Right cardiac atrium (tissue), 5 donors: ENCODE measurements at regions of chr3 and their contacts with region 1.

Region 1: DNA sequence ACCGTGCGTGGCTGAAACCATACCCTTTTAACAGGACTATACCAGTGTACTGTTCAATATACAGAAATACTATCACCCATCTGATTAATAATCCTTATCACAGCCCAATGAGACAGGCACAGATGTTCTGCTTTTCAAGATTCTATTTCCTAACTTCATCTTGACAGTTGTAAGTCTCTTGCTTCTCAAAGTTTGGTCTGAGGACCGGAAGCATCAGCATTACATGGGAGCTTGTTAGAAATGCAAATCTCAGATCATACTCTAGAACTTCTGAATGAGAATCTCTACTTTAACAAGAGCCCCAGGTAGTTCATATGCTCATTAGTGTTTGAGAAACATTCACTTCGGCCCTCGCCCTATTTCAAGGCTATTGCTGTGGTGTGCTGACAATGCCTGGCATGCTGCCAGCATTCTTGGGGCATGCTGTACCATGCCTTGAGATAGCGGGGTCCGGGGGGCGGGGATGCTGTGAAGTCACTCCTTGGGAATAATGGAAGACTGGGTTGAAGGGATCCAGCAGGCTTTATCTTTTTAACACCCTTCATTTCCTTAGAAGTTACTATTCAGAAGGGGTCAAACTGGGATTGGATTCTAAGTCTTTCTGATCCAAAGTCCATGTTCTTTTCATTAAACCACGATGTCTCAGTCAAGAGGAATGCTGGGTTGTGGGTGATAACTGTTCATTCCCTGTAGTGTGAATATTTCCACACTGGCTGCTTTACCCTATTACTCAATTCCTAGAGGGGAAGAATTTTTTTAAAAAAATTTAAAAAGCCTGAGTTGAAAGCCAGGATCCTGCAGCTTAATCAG is 194.7 kb downstream of the LPP start:
- DNase-seq: peak; percentile 90 to 97 (median 91)
- ATAC-seq: peak; percentile 92 to 93
- H3K4me3 ChIP-seq: no peak overlapping the region
- H3K27ac ChIP-seq: peak overlapping the region; percentile 70
- H3K4me1 ChIP-seq: peaks cover 7% of the 10 kb centered on the region
- H3K27me3 ChIP-seq: no peaks in the 10 kb centered on the region

Region 2: DNA sequence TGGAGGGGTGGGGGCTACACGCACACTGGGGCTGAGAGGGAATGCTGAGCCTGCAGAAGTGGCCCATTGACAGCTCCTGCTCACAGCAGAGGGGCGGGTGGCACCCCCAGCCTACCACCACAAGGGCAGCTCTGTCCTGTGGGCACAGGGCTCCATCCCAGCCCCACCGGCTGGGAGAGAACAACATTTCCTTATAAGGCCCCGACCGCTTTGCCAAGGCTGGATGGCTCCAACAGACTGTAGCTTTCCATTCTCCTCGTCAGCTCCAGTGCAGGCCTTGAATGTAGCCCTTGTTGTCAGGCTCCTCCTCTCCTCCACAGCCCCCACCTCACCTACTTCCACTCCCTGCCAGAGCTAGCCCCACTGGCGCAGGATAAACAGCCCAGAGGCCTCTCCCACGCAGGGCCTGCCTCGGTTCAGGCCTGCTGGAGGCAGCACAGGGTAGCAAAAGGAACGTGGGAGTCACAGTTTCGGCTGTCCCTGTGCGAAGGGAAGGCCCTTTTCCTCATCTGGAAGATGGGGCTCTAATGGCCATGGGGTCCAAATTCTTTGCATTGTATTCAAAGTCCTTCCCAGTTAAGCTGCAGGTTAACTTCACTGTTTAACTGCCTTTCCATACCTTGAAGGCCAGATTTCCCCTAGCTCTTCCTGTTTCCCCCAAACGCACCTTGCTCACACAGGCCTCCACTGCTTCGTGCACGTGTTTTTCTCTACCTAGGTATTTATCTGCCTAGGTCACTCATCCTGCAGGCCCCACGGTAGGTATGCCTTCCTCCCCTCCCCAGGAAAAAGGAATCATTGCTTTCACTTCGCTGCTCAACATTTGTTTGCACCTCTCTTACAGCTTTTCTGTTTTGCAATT is 296.2 kb before region 1 on chr3:
- intact Hi-C with region 1: loop called in 1 of 4 experiments (anchors 5 kb)
- DNase-seq: peak; percentile 92 to 96 (median 95)
- ATAC-seq: peak; percentile 97 to 99
- H3K4me3 ChIP-seq: no peak overlapping the region
- H3K27ac ChIP-seq: peak overlapping the region; percentile 94
- H3K4me1 ChIP-seq: peaks cover 3% of the 10 kb centered on the region
- H3K27me3 ChIP-seq: no peaks in the 10 kb centered on the region

Region 3: DNA sequence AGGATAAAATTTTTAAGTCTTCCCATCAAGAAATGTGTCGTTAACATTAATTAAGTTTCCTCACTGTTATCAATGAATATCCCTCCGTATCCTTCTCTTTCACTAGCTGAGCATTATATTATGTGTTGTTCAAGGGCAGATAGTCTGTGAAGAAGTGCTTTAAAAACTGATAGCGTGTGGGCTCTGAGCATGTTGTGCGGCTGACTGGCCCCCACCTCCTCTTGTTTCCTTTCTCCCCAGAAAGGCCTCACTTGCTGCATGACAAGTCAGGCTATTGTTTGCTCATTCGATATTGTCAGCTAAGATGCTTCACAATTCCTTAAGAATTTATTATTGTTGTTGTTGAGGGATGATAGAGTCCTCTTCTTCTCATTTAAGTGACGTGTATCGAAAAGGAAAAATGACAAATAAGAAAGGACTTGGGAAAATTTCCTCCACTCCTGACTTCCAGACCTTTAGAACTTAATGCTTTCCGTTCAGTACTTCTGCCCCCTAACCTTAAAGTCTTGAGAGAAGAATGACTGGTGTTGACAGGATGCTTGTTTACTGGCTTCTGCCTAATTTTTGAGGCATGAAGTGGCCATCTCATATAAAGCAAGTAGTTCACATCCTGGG is 103.6 kb after region 1 on chr3:
- intact Hi-C with region 1: no loop called
- DNase-seq: no peak
- ATAC-seq: no peak
- H3K4me3 ChIP-seq: no peak overlapping the region
- H3K27ac ChIP-seq: no peak overlapping the region
- H3K4me1 ChIP-seq: peaks cover 8% of the 10 kb centered on the region
- H3K27me3 ChIP-seq: no peaks in the 10 kb centered on the region

Region 4: DNA sequence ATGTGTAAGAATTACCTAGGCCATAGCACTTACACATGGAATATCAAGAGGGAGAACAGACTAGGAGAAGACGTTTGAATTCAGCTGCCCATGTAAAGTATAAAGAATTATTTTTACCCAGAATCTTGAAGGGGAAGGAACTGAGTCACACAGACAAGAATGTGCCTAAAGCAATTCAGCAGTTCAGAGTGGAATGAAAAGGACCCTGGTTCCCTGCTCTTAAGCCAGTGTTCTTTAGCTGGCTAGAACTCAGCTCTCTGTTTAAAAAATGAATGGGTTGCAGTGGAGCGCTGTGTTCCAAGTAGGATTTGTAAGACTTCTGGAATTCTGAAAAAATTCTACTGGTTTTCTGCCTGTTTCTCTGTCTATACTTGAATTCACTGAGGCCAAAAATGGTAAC is 245.5 kb after region 1 on chr3:
- intact Hi-C with region 1: no loop called
- DNase-seq: no peak
- ATAC-seq: peak; percentile 85 to 90
- H3K4me3 ChIP-seq: no peak overlapping the region
- H3K27ac ChIP-seq: no peak overlapping the region
- H3K4me1 ChIP-seq: peaks cover 2% of the 10 kb centered on the region
- H3K27me3 ChIP-seq: no peaks in the 10 kb centered on the region

Region 5: DNA sequence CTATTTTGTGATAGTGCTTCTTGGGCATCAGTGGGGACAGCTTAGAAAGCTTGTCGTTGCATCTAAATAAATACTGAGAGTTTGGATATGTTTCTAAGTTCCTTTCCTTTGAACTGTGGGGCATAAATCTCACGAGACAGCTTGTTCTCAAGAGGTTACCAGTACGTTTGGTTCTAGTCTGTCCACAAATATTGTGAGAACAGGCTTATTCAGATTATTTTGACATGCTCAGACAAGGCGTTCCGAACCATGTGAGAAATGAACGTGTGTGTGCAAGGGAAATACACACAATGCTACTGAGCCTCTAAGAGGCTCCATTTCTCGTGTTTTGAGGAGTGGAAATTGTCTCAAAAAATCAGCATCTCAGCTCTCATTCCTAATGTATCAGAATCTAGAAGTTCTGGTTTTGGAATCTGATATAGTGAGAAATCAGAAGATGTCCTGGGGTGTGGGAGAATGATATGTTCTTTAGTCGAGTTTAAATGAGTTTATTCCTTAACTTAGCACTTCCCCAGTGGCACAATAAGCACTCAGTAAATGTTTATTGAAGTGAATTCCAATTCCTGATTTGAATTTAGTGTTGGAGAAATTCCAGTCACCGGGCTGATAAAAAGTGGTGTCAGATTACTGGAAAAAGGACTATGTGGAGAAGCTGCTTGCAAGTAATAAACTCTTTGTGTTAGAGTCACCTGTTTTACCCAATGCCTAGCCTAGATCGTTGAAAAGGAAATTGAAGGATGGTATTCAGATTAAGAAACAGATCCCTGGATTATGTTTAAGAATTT is 286.8 kb after region 1 on chr3:
- intact Hi-C with region 1: no loop called
- DNase-seq: no peak
- ATAC-seq: peak in 1 of 2 donors; percentile 48
- H3K4me3 ChIP-seq: no peak overlapping the region
- H3K27ac ChIP-seq: peak overlapping the region; percentile 20
- H3K4me1 ChIP-seq: no peaks in the 10 kb centered on the region
- H3K27me3 ChIP-seq: no peaks in the 10 kb centered on the region